ENCODE measurements at regions of chr2 and their contacts with region 1.

Region 1: GRCh38 chr2:174465327-174465726 is 21.5 kb downstream of the GPR155 start:
- DNase-seq: no peak

Region 2: DNA sequence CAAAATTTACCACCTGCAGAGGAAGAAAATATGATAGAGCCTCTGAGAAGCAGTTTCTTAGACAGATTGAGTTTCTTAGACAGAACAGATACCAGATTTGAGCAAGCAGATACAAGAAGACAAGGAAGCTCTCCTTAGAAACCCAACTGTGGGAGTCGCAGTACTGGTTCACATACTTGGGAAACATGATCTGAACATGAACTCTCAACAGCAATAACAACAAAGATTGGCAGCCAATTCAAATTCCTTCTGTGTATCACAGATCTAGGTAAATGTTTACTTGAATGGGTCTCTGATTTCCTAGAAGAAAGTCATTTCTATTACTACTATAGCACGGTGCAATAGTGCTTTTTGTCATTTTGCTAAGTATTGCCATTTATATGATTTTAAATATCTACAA is 299.0 kb before region 1 on chr2:
- intact Hi-C with region 1: no loop called
- DNase-seq: no peak

Region 3: DNA sequence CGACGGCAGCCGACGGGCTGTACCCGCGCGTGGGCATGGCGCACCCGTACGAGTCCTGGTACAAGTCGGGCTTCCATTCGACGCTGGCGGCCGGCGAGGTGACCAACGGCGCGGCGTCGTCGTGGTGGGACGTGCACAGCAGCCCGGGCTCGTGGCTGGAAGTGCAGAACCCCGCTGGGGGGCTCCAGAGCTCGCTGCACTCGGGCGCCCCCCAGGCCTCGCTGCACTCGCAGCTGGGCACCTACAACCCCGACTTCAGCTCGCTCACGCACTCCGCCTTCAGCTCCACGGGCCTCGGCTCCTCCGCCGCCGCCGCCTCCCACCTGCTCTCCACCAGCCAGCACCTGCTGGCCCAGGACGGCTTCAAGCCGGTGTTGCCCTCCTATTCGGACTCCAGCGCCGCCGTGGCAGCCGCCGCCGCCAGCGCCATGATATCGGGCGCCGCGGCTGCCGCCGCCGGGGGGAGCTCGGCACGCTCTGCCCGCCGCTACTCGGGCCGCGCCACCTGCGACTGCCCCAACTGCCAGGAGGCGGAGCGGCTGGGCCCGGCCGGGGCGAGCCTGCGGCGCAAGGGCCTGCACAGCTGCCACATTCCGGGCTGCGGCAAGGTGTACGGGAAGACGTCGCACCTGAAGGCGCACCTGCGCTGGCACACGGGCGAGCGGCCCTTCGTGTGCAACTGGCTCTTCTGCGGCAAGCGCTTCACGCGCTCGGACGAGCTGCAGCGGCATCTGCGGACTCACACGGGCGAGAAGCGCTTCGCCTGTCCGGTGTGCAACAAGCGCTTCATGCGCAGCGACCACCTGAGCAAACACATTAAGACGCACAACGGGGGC is 128.6 kb before region 1 on chr2:
- intact Hi-C with region 1: no loop called
- DNase-seq: peak in 1 of 10 donors; percentile 80

Region 4: DNA sequence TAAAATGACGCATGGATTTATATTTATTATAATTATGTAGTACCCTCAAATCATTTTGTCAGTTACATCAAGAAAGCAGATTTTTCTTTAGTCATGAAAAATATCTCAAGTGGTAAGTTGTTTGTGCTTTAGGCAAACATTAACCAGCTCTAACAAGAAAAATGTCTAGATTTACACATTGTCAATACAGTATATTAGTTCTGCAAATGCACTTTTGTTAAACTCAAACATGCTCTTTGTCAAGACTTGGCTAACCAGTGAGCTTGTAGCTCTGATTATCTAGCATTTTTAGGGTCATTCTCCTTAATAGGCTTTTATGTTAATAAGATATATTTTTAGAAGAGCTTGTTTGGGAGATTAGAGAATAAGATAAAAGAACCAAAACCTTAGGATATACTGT is 37.1 kb before region 1 on chr2:
- intact Hi-C with region 1: no loop called
- DNase-seq: no peak

Region 5: DNA sequence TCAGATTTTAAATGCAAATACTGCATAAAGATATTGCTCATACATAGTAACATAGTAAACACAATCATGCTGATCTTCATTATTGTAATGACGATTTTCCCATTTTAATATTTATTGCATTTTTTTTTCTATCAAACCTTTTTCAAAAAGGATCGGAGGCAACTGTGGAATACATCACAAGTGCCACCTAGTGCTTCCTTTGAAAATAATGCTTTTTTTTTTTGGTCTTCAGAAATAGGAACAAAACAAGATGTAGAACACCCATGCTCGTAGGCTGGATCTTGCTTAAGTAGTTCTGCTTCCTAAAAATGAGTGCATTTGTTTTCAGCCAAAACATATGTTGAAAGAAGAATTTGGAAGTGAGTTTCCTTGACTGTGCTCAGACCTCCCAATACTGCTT is 57.2 kb after region 1 on chr2:
- intact Hi-C with region 1: loop called (anchors 1 kb)
- DNase-seq: no peak

Region 6: GRCh38 chr2:174546581-174547506 is 81.5 kb after region 1 on chr2:
- intact Hi-C with region 1: loop called (anchors 2 kb)
- DNase-seq: peak in 6 of 10 donors; percentile 15 to 87 (median 48)

Region 7: DNA sequence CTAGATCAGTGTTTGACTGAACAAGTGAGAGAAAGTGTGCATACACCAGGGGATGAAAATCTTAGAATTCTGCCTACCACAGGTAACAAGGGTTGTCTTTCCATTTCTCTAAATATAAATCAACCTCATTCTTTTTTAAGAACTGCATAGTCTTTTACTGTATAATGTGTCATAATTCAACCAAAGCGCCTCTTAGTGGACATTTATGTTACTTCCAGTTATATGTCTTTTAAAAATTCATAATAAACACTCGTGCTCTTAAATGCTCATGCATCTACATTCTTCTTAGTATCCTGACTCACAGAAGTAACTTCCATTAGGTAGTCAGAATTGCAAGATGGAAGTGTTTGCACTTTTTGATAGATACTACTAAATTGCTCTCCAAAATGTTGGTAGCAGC is 222.8 kb after region 1 on chr2:
- intact Hi-C with region 1: loop called (anchors 5 kb)
- DNase-seq: no peak

Region 8: DNA sequence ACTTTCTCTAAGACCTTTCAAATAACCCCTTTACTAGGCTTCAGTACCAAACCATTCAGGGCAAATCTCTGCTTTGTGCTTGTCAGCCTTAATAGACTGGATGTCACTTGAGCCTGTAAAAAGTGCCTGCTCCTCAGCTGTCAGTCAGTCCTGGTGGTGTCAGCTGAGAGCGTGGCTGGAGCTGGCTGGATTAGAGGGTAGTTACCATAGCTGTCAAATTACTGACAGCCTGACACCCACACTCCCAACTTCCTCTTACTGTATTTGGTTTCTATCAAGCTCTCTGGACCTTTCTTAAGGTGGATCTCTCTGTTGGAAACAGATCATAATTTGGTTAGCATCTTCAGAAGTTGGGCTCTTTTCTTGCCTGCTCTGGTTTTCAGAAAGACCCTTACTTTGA is 1087.6 kb after region 1 on chr2:
- intact Hi-C with region 1: no loop called
- DNase-seq: no peak